ENCODE measurements at regions of chr6 and their contacts with region 1.

Region 1: GRCh38 chr6:20212392-20213217 is at the start of gene MBOAT1:
- DNase-seq: peak; percentile 89 to 94 (median 91)
- H3K4me3 ChIP-seq: peak within 1 kb of the TSS; percentile 94
- H3K27ac ChIP-seq: peak within 1 kb of the TSS; percentile 82 to 89
- H3K4me1 ChIP-seq: peaks cover 10% of the 10 kb centered on the region
- H3K27me3 ChIP-seq: no peaks in the 10 kb centered on the region
- CTCF ChIP-seq: no peak
- EP300 ChIP-seq: no peak
- POLR2A ChIP-seq: peak; percentile 64
- total RNA-seq, gene MBOAT1: 11.2 to 30.2 (median 13.4) TPM

Region 2: DNA sequence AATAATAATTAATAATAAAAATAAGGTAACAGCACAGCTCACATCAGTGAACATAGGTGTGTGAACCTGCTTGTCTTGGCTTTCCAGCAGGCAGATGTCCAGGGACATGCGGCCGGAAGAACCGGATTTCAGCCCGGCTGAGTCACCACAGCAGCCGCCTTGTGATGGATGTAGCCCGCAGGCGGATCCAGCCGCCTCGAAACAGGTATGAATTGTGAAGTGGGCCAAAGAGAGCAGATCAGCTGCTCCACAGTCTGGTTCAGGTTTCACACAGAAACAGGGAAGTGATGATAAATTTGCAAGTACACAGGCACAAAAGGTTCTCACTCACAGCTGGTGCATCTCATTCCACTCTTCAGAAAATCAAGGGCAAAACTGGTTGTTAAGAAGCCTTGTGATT is 320.3 kb before region 1 on chr6:
- intact Hi-C with region 1: no loop called
- DNase-seq: peak in 2 of 5 donors; percentile 16 to 22
- H3K4me3 ChIP-seq: no peak overlapping the region
- H3K27ac ChIP-seq: no peak overlapping the region
- H3K4me1 ChIP-seq: no peaks in the 10 kb centered on the region
- H3K27me3 ChIP-seq: no peaks in the 10 kb centered on the region
- CTCF ChIP-seq: no peak
- EP300 ChIP-seq: no peak
- POLR2A ChIP-seq: no peak

Region 3: DNA sequence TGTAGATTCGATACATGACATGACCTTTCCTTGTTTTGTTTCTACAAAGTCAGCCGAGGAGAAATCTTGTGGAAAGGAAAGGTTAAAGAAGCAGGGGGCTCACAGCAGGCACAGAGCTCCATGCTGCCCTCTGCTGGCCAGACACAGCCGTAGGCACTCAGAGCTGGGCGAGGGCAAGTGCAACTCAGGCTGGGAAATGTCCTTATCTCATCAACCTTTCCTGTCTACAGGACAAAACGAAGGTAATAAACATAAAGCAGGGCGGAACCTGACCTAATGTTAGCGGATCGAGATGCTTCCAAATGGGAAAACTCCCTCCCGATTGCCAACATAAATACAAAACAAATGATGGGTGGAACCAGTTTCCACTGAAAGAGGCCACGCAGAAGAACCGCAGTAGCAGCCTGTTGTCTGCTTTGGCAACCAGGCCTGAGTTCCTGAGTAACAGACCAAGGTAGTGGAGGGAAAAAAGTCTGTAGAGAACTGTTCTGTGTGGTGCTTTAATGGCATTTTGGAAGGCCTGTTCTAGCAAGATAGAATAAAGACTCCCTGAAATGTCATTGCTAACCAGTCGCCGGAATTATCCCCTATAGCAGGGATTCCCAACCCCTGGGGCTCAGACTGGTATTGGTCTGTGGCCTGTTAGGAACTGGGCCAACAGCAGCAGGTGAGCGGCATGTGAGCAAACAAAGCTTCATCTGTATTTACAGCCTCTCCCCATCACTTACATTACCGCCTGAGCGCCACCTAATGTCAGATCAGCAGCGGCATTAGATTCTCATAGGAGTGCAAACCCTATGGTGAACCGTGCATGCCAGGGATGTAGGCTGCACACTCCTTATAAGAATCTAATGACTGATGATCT is 85.6 kb before region 1 on chr6:
- intact Hi-C with region 1: loop called in 3 of 4 experiments (anchors 5 to 10 kb)
- DNase-seq: peak; percentile 64 to 83 (median 75)
- H3K4me3 ChIP-seq: no peak overlapping the region
- H3K27ac ChIP-seq: peak overlapping the region in 1 of 2 donors; percentile 24
- H3K4me1 ChIP-seq: peaks cover 5% of the 10 kb centered on the region
- H3K27me3 ChIP-seq: no peaks in the 10 kb centered on the region
- CTCF ChIP-seq: peak; percentile 51 to 82 (median 69)
- EP300 ChIP-seq: no peak
- POLR2A ChIP-seq: no peak

Region 4: DNA sequence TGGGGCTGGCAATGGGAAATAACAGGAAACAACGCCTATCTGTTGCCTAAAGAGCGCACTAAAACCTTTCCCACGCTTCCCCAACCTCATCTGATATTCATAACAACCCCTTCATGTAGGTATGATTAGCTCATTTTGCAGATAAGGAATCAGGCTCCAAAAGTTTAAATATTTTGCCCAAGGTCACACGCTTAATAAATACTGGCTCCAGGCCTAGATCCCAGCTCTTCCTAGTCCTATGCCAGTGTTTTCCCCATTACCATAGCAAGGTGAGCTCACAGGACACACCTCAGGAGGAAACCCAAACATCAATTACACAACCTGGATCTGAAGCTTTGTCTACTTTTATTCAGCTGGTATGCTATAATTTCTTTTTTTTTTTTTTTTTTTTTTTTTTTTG is 20.0 kb before region 1 on chr6:
- intact Hi-C with region 1: loop called in 1 of 4 experiments (anchors 2 kb)
- DNase-seq: no peak
- H3K4me3 ChIP-seq: no peak overlapping the region
- H3K27ac ChIP-seq: no peak overlapping the region
- H3K4me1 ChIP-seq: peaks cover 2% of the 10 kb centered on the region
- H3K27me3 ChIP-seq: no peaks in the 10 kb centered on the region
- CTCF ChIP-seq: no peak
- EP300 ChIP-seq: no peak
- POLR2A ChIP-seq: no peak